ENCODE measurements at regions of chr15 and their contacts with region 1.

Region 1: DNA sequence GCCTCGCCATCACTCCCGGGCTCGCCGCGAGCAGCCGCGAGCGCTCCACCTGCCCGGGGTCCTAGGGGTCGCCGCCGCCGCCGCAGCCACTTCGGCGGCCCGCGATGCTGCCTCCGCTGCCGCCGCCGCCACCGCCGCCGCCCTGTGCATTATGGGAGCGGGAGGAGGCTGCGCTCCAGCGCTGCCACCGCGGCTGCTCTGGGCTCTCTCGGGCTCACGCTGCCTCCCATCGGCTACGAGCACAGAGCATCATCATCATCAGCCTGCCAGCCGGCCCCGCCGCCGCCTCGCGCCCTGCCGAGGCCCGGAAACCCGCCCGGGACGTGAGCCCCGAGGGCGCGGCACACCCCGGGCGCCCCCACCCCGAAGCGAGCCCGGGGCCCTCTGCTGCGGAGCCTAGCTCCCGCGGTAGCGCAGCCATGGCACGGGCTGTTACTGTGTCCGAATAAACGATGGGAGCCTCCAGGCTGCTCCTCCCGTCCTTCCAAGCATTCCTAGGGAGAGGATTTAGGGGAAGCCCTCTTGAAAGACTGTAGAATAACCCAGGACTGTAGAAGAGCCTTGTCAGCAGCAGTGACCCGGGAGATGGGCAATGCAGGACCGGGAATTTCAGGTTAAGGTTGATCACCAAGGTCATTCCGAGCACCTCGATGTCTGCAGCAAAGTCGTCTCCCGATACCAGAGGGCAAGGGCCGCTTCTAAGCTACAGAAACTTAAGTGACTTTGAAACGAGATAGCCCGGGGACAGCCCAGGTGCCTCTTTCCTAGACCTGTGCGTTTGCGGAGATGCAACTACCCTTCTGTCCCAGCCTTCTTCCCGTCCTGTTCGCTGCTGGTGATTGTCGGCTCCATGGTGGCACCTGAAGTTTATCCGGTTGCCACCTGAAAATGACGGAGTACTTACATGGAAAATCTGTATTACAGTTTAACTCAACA is 579 bp upstream of the MYO5A start:
- DNase-seq: peak; percentile 72 to 82 (median 80)
- ATAC-seq: peak; percentile 93
- H3K4me3 ChIP-seq: peak overlapping the region; percentile 60
- H3K4me3 Mint-ChIP-seq: peak overlapping the region; percentile 72 to 94 (median 89)
- H3K27ac ChIP-seq: peak overlapping the region; percentile 67
- H3K27ac Mint-ChIP-seq: peak overlapping the region; percentile 38 to 87 (median 74)
- H3K4me1 ChIP-seq: peaks cover 11 to 12% of the 10 kb centered on the region in 2 donors
- H3K4me1 Mint-ChIP-seq: peaks cover 22 to 37% (median 25%) of the 10 kb centered on the region in 7 donors
- H3K27me3 ChIP-seq: no peaks in the 10 kb centered on the region
- H3K27me3 Mint-ChIP-seq: peaks cover 0 to 25% (median 0%) of the 10 kb centered on the region in 5 donors

Region 2: GRCh38 chr15:51829360-51830275 is 699.6 kb before region 1 on chr15 and contains the start of gene TMOD3:
- CTCF ChIA-PET with region 1: no interaction called
- POLR2A ChIA-PET with region 1: no interaction called
- intact Hi-C with region 1: loop called in 1 of 2 experiments (anchors 5 kb)
- DNase-seq: peak; percentile 79 to 94 (median 84)
- ATAC-seq: peak; percentile 94
- H3K4me3 ChIP-seq: peak within 1 kb of the TSS; percentile 93
- H3K4me3 Mint-ChIP-seq: peak within 1 kb of the TSS; percentile 94 to 99 (median 98)
- H3K27ac ChIP-seq: peak within 1 kb of the TSS; percentile 85
- H3K27ac Mint-ChIP-seq: peak within 1 kb of the TSS; percentile 87 to 97 (median 94)
- H3K4me1 ChIP-seq: peaks cover 21 to 26% of the 10 kb centered on the region in 2 donors
- H3K4me1 Mint-ChIP-seq: peaks cover 30 to 51% (median 41%) of the 10 kb centered on the region in 7 donors
- H3K27me3 ChIP-seq: no peaks in the 10 kb centered on the region
- H3K27me3 Mint-ChIP-seq: peaks cover 0 to 8% (median 0%) of the 10 kb centered on the region in 5 donors
- total RNA-seq, gene TMOD3: 46.5 to 75.9 (median 50.4) TPM

Region 3: DNA sequence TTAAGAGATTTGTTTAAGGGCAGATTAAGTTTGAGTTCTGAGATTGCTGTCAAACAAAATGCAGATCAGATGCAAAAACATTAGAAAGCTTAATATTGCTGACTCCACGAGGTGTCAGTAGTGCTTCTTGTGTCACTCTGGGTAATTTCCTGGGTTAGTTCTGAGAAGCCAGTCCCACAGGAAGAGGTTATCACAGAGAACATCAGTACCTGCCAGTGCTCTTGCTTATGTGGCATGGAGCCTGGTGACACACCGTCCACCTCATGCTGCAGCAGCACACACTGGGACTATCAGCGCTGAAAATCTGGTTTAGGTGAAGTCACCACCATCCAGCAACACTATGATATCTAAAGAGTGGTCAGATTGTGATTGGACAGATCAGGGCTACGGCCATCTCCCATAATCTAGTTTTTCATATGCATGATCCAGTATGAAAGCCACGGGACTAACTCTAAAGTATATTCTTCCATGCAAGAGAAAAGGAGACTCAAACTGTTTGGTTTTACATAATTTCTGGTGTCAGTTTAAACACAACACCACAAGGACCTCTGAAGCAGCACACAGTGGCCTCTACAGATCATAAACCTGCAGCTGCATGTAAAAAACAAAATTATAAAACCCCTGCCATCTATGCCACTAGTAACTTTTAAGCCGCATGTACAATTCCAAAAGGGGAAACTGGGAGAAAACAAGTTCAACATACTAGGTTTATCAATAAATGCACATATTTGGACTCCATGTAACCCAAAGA is 197.6 kb before region 1 on chr15:
- CTCF ChIA-PET with region 1: no interaction called
- POLR2A ChIA-PET with region 1: interaction called, 3 read pairs
- intact Hi-C with region 1: loop called (anchors 1 kb)
- DNase-seq: peak in 8 of 9 donors; percentile 43 to 70 (median 54)
- ATAC-seq: peak; percentile 97
- H3K4me3 ChIP-seq: no peak overlapping the region
- H3K4me3 Mint-ChIP-seq: peak overlapping the region in 8 of 10 donors; percentile 26 to 81 (median 54)
- H3K27ac ChIP-seq: no peak overlapping the region
- H3K27ac Mint-ChIP-seq: peak overlapping the region; percentile 53 to 92 (median 71)
- H3K4me1 ChIP-seq: peaks cover 10 to 11% of the 10 kb centered on the region in 2 donors
- H3K4me1 Mint-ChIP-seq: peaks cover 11 to 23% (median 19%) of the 10 kb centered on the region in 7 donors
- H3K27me3 ChIP-seq: no peaks in the 10 kb centered on the region
- H3K27me3 Mint-ChIP-seq: no peaks in the 10 kb centered on the region

Region 4: DNA sequence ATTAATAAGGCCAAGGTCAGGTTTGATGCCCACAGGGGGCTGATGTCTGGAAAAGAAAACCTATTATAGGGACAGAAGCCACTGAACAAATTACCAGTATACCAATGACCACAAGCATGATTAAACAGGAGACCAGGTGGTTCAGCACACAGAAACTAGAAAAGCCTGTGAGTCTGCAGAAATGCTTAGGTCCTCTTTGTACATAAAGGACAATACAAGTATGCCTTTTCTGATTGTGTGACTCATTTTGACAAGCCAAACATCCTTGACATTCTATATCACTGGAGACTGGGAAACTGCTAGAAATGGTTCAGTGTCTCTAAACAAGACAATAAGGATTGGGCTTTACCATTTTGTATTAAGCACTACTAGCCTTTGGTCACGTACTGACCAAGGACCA is 120.4 kb before region 1 on chr15:
- CTCF ChIA-PET with region 1: no interaction called
- POLR2A ChIA-PET with region 1: interaction called, 3 read pairs
- intact Hi-C with region 1: loop called in 1 of 2 experiments (anchors 1 kb)
- DNase-seq: no peak
- ATAC-seq: no peak
- H3K4me3 ChIP-seq: no peak overlapping the region
- H3K4me3 Mint-ChIP-seq: no peak overlapping the region
- H3K27ac ChIP-seq: no peak overlapping the region
- H3K27ac Mint-ChIP-seq: no peak overlapping the region
- H3K4me1 ChIP-seq: no peaks in the 10 kb centered on the region
- H3K4me1 Mint-ChIP-seq: no peaks in the 10 kb centered on the region
- H3K27me3 ChIP-seq: no peaks in the 10 kb centered on the region
- H3K27me3 Mint-ChIP-seq: no peaks in the 10 kb centered on the region

Region 5: DNA sequence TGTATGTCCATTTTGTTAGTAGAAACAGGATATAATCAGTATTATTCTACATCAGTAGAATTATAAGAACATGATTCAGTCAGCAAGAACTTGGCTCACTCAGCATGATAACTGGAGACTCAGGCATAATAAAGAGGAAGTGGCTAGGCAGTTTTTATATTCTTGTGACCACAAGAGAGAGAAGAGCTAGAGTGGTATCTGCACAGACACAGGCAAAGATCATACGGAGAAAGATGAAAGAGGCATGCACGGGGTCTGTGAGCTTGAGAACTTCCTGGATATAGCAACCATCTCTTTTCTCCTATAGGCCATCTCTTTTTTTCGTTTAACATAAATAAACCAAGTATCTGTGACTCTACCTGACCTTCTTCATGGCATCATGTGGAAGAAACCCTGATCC is 47.3 kb before region 1 on chr15:
- CTCF ChIA-PET with region 1: interaction called, 3 read pairs
- POLR2A ChIA-PET with region 1: interaction called, 5 read pairs
- intact Hi-C with region 1: loop called (anchors 1 kb)
- DNase-seq: peak in 7 of 9 donors; percentile 75 to 91 (median 87)
- ATAC-seq: peak; percentile 99
- H3K4me3 ChIP-seq: peak overlapping the region; percentile 36
- H3K4me3 Mint-ChIP-seq: peak overlapping the region; percentile 8 to 78 (median 58)
- H3K27ac ChIP-seq: no peak overlapping the region
- H3K27ac Mint-ChIP-seq: peak overlapping the region; percentile 15 to 88 (median 53)
- H3K4me1 ChIP-seq: peaks cover 30 to 43% of the 10 kb centered on the region in 2 donors
- H3K4me1 Mint-ChIP-seq: peaks cover 56 to 71% (median 59%) of the 10 kb centered on the region in 7 donors
- H3K27me3 ChIP-seq: no peaks in the 10 kb centered on the region
- H3K27me3 Mint-ChIP-seq: no peaks in the 10 kb centered on the region

Region 6: DNA sequence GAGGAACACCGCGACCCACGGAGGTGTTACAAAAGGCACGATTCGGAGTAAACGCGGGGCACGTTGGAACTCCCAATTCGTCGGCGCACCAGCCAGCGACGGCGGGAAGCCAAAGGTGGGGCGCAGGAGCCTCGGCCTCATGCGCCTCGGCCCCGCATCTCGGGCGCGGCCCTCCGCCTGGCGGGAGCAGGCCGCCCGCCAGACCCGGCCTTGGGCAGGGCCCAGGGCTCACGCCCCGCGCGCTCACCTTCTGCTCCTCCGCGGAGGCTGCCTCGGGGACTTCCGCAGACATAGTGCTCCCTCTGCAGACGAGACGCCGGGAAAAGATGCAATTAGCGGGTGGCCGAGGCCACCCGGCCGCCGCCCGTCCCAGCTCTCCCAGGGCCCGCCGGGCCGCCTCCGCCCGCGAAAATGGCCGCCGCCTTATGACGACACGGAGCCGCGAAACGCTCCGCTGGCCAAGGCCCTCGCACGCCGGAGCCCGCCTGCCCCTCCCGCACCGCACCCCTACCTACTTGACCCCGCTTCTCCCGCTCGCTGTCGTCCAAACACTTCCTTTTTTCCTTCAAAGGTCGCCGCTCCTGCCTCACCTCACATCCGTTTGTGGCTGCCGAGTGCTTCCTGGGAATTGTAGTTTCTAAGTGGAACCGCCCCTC is 39.5 kb after region 1 on chr15 and contains the start of gene ARPP19:
- CTCF ChIA-PET with region 1: no interaction called
- POLR2A ChIA-PET with region 1: no interaction called
- intact Hi-C with region 1: loop called (anchors 1 kb)
- DNase-seq: peak; percentile 58 to 81 (median 76)
- ATAC-seq: peak; percentile 83
- H3K4me3 ChIP-seq: peak within 1 kb of the TSS; percentile 75
- H3K4me3 Mint-ChIP-seq: peak within 1 kb of the TSS; percentile 89 to 100 (median 96)
- H3K27ac ChIP-seq: peak within 1 kb of the TSS; percentile 98
- H3K27ac Mint-ChIP-seq: peak within 1 kb of the TSS; percentile 95 to 100 (median 100)
- H3K4me1 ChIP-seq: peaks cover 13 to 25% of the 10 kb centered on the region in 2 donors
- H3K4me1 Mint-ChIP-seq: peaks cover 28 to 46% (median 42%) of the 10 kb centered on the region in 7 donors
- H3K27me3 ChIP-seq: no peaks in the 10 kb centered on the region
- H3K27me3 Mint-ChIP-seq: peaks cover 0 to 3% (median 0%) of the 10 kb centered on the region in 5 donors
- total RNA-seq, gene ARPP19: 94.9 to 148 (median 122) TPM

Region 7: GRCh38 chr15:52735231-52736089 is 206.2 kb after region 1 on chr15:
- CTCF ChIA-PET with region 1: no interaction called
- POLR2A ChIA-PET with region 1: no interaction called
- intact Hi-C with region 1: loop called (anchors 1 to 2 kb)
- DNase-seq: peak; percentile 22 to 83 (median 73)
- ATAC-seq: peak; percentile 90
- H3K4me3 ChIP-seq: no peak overlapping the region
- H3K4me3 Mint-ChIP-seq: no peak overlapping the region
- H3K27ac ChIP-seq: no peak overlapping the region
- H3K27ac Mint-ChIP-seq: peak overlapping the region in 3 of 9 donors; percentile 2 to 75 (median 55)
- H3K4me1 ChIP-seq: peaks cover under 1 to 4% of the 10 kb centered on the region in 2 donors
- H3K4me1 Mint-ChIP-seq: peaks cover 0 to 25% (median 7%) of the 10 kb centered on the region in 7 donors
- H3K27me3 ChIP-seq: no peaks in the 10 kb centered on the region
- H3K27me3 Mint-ChIP-seq: peaks cover 0 to 12% (median 3%) of the 10 kb centered on the region in 5 donors